Head of caudate nucleus (tissue), 42 donors: ENCODE measurements at regions of chr17 and their contacts with region 1.

Region 1: DNA sequence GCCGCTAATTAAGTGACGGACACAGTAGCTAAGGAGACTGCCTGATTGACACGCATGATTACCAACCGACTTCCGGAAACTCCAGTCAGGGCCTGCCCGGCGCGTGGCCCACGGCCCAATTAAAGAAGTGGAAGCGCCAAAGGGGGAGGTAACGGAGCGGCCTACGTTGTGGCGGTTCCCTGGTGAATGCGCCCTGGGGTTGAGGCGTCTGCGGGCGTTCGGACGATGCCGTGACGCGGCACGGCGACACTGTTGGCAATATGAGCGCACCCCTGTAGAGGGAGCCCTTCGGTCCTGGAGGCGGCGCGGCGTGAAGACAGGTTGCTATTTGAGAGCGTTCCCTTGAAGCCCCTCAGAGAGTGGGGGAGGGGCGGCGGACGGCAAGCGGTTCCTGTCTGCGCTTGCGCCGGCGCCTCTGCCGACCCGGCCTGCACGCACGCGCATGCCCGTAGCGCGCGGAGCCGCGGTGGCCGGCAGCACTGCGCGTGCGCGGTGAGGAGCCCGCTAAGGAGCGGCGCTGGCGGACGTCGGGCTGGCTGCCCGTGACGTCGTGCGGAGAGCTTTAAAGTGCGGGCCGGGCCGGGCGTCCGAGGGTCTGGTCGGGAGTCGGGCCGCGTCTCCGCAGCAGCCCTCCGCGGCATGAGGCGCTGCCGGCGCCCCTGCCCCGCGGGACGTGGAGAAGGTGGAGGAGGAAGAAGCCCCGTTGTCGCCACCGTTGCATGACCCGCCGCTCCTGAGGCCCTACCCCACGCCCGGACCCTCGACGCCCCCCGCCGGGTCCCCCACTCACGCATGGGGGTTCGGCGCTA is at the start of gene ALKBH5:
- DNase-seq: peak; percentile 94 to 99 (median 98)

Region 2: DNA sequence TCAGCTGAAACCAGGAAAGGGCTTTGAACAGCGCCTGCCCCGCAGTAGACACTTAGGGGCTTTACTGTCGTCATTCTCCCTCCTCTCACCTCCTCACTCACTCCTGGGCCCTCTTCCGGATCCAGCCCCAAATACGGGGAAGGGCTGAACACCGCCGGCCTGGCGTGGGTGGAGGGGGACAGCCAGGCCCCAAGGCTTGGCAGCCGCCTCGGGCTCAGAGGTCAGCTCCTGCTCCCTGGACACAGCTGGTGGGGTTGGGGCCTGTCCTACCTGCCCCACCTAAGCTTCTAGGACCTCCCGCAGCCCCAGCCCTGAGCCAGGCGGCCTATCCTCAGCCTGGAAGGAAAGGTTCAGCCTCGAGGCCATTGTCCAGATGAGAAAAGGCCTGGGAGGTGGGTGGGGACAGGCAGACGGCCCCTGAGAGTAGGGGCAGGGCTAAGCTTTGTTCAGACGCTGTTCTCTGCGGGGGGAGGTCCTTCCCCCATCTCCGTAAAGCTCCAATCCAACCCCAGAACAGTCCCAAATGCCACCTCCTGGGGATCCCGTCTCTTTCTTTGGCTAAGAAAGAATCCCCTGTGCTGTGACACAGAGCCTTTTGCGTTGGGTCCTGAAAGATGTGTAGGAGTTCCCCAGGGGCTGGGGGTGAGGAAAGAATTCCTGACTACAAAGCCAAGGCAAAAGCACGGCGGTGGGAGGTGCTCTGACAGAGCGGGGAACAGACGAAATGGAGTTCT is 41.0 kb after region 1 on chr17:
- intact Hi-C with region 1: loop called (anchors 5 kb)
- DNase-seq: no peak